ENCODE measurements at regions of chr1 and their contacts with region 1.

Region 1: GRCh38 chr1:16146279-16147155 is 9.4 kb downstream of the EPHA2 start:
- DNase-seq: peak; percentile 81
- H3K4me3 Mint-ChIP-seq: peak overlapping the region; percentile 71
- H3K27ac Mint-ChIP-seq: peak overlapping the region; percentile 91
- H3K4me1 Mint-ChIP-seq: peaks cover 48% of the 10 kb centered on the region
- H3K27me3 Mint-ChIP-seq: no peaks in the 10 kb centered on the region
- CTCF ChIP-seq: no peak

Region 2: DNA sequence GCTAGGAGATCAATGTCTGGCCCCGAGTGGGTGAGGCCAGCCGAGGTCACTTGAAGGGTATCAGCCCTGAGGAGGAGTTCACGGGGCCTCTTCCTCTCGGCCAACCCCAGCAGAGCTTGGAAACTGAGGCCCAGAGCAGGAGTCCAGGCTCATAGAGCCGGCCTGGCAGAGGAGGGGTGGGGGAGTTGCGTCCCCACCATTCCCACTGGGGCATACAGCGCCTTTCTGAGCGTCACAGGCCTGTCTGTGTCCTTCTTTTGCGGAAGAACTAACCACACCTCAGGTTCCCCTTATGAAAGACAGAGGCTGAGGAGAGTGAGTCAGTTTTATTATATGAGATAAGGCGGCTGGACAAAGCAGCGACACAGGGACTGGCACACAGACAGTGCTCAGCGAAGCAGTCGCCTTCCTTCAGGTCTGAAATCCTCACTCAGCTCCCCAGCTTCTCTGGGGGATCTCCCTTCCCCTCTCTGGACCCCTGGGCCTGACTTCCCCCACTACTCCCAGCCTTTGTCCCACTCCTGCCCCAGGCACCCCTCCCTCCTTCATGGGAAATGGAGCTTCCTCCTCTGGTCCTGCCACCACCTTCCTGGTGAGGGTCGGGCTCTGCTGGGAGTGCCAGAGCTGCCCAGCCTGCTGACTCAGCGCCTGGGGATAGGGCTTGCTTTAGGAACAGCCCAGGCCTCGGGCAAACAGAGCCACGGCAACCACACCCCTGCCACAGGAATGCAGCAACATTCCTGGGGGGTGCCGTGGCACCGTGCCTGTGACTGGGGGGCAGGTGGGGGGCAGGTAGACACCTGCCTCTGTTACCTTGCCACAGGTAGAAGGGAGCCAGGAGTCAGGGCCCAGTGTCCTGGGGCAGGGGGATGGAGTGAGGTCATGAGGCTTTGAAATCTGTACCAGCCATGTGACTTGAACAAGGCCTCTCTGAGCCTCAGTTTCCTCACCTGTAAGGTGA is 26.8 kb after region 1 on chr1:
- CTCF ChIA-PET with region 1: interaction called, 7 read pairs
- intact Hi-C with region 1: loop called (anchors 2 kb)
- DNase-seq: peak; percentile 96
- H3K4me3 Mint-ChIP-seq: peak overlapping the region; percentile 68
- H3K27ac Mint-ChIP-seq: peak overlapping the region; percentile 100
- H3K4me1 Mint-ChIP-seq: peaks cover 55% of the 10 kb centered on the region
- H3K27me3 Mint-ChIP-seq: no peaks in the 10 kb centered on the region
- CTCF ChIP-seq: no peak

Region 3: DNA sequence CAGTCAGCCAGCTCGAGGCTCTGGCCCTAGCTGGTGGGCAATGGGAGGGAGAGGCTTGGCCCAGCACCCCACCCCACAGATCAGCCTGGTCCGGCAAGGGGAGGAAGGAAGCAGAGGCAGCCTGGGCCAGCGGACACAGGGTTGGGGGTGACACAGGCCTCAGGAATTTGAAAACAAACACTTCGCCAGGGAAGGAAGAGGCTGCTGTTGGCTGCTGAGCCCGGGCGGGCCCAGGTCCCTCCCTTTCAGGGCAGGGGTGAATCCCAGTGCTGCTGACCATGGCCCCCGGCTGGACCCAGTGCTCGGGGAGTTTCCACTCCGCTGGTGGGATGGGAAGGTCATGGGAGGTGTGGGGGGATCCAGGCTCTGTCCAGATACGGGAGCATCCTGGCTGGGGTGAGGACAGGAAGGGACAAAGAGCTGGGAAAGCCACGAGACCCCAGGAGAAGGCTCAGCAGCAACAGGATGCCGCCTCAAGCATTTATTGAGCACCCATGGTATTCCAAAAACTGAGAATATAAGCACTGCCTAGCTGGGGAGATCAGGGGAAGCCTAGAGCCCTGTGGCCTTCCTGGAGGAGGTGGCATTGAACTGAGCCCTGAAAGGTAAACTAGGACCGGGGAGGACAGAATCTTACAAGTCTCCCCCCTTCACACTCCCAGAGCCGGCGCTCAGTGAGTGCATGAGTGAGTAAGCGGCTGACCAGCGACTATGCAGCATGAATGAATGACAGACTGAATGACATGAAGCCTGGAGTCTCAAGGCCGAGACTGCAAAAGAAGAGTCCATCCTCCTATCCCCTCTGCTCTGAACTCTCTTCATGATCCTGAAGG is 35.6 kb after region 1 on chr1:
- CTCF ChIA-PET with region 1: interaction called, 3 read pairs
- intact Hi-C with region 1: loop called (anchors 2 kb)
- DNase-seq: peak; percentile 89
- H3K4me3 Mint-ChIP-seq: peak overlapping the region; percentile 65
- H3K27ac Mint-ChIP-seq: peak overlapping the region; percentile 97
- H3K4me1 Mint-ChIP-seq: peaks cover 38% of the 10 kb centered on the region
- H3K27me3 Mint-ChIP-seq: no peaks in the 10 kb centered on the region
- CTCF ChIP-seq: no peak

Region 4: DNA sequence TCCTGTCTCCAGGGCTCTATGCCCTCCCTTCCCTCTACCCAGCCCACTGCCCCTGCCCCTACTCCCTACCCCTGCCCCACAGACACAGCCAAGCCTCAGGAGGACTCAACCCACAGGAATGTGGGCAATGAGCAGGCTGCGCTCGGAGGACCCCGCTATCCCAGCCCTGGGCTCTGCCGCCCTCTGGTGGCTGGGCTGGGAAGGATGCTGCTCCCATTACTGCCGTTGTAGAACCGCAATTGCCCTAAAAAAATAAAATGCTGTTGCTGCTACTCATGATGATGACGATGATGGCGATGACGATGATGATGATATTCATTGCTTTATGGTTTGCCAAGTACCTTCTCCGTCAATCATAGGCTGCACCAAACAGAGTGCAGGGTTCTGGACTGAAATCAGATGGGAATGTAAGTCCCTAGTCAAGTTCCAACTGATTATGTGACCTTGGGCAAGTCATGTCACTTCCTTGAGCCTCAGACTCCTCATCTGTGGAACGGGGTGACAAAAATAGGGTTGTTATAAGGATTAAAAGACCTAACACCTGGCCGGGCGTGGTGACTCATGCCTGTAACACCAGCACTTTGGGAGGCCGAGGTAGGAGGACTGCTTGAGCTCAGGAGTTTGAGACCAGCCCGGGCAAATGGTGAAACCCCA is 41.4 kb after region 1 on chr1:
- CTCF ChIA-PET with region 1: interaction called, 12 read pairs
- intact Hi-C with region 1: loop called (anchors 2 kb)
- DNase-seq: peak; percentile 81
- H3K4me3 Mint-ChIP-seq: no peak overlapping the region
- H3K27ac Mint-ChIP-seq: no peak overlapping the region
- H3K4me1 Mint-ChIP-seq: peaks cover 31% of the 10 kb centered on the region
- H3K27me3 Mint-ChIP-seq: peaks cover 8% of the 10 kb centered on the region
- CTCF ChIP-seq: peak; percentile 85